Calu3 (cell line): ENCODE measurements at regions of chr19 and their contacts with region 1.

Region 1: GRCh38 chr19:50922317-50922853 is 11.2 kb upstream of the KLK4 start:
- DNase-seq: peak; percentile 91
- H3K4me3 Mint-ChIP-seq: no peak overlapping the region
- H3K27ac Mint-ChIP-seq: peak overlapping the region; percentile 10
- H3K4me1 Mint-ChIP-seq: peaks cover 21% of the 10 kb centered on the region
- H3K27me3 Mint-ChIP-seq: peaks cover 28% of the 10 kb centered on the region
- CTCF ChIP-seq: peak; percentile 94

Region 2: GRCh38 chr19:50794439-50795237 is 127.7 kb before region 1 on chr19:
- CTCF ChIA-PET with region 1: interaction called, 4 read pairs
- intact Hi-C with region 1: loop called (anchors 5 kb)
- DNase-seq: peak; percentile 68
- H3K4me3 Mint-ChIP-seq: peak overlapping the region; percentile 17
- H3K27ac Mint-ChIP-seq: peak overlapping the region; percentile 90
- H3K4me1 Mint-ChIP-seq: no peaks in the 10 kb centered on the region
- H3K27me3 Mint-ChIP-seq: peaks cover 21% of the 10 kb centered on the region
- CTCF ChIP-seq: peak; percentile 27

Region 3: GRCh38 chr19:50909240-50910070 is 12.9 kb before region 1 on chr19:
- CTCF ChIA-PET with region 1: interaction called, 18 read pairs
- intact Hi-C with region 1: no loop called
- DNase-seq: peak; percentile 80
- H3K4me3 Mint-ChIP-seq: no peak overlapping the region
- H3K27ac Mint-ChIP-seq: no peak overlapping the region
- H3K4me1 Mint-ChIP-seq: no peaks in the 10 kb centered on the region
- H3K27me3 Mint-ChIP-seq: no peaks in the 10 kb centered on the region
- CTCF ChIP-seq: no peak

Region 4: DNA sequence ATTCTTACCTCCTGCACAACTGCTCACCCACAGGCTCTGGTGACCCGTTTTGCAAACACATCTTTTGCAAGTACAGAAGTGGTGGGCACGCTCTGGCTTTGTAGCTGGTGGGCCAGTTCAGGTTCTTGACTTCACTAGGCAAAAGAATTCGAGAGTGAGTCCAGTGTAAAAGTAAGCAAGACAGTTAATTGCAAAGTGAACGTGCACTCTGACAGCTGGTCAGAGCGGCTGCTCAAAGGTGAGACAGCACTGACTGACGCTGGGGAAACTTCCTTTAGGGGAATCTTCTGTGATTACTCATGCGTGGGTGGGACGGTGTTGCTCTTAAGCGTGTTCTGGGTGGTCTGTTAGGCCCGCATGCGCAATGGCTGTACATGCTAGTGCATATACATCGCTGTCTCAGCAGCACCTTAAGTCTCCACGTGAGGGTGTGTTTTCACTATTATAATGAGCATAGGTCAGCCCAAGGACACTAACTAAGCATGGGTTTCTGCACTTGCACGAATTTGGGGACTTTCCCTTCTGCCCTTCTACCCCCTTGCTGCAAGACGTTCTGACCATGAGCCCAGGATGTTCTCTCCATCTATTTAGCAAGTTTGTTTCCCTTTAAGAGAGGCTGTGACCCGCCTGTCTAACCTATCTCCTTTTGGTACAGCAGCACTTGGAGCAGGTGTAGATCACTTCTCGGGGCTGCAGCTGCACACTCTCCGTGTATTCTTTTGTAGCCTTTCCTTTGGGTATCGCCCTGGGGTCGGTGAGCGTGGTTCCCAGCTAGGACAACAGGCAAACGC is 272.3 kb after region 1 on chr19:
- CTCF ChIA-PET with region 1: no interaction called
- intact Hi-C with region 1: no loop called
- DNase-seq: peak; percentile 24
- H3K4me3 Mint-ChIP-seq: no peak overlapping the region
- H3K27ac Mint-ChIP-seq: no peak overlapping the region
- H3K4me1 Mint-ChIP-seq: peaks cover 13% of the 10 kb centered on the region
- H3K27me3 Mint-ChIP-seq: peaks cover 83% of the 10 kb centered on the region
- CTCF ChIP-seq: no peak